ENCODE measurements at regions of chr2 and their contacts with region 1.

Region 1: DNA sequence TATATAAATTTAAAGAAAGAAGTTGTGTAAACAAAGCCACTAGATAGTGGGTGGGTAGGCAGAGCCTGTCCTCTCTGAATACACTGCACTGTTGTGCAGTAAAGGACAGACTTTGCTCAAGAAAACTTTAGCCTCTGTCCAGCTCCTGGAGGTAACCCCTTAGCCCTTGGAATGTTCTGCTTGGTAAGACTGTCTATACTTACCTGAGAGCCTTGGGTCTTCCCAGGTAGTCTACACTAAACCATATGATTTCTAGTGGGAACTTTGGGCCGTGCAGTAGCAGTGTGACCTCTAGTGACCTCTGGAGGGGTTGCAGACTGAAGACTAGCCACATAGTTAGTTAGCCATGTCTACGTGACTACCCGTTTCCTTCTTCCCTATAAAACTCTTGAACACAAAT is 678.3 kb upstream of the NRXN1 start:
- DNase-seq: peak; percentile 3
- H3K4me3 ChIP-seq: no peak overlapping the region
- H3K27ac ChIP-seq: no peak overlapping the region
- H3K4me1 ChIP-seq: no peaks in the 10 kb centered on the region
- H3K27me3 ChIP-seq: no peaks in the 10 kb centered on the region
- CTCF ChIP-seq: 0 out of 2 replicates have a peak, but pooled peaks have one; percentile 18

Region 2: DNA sequence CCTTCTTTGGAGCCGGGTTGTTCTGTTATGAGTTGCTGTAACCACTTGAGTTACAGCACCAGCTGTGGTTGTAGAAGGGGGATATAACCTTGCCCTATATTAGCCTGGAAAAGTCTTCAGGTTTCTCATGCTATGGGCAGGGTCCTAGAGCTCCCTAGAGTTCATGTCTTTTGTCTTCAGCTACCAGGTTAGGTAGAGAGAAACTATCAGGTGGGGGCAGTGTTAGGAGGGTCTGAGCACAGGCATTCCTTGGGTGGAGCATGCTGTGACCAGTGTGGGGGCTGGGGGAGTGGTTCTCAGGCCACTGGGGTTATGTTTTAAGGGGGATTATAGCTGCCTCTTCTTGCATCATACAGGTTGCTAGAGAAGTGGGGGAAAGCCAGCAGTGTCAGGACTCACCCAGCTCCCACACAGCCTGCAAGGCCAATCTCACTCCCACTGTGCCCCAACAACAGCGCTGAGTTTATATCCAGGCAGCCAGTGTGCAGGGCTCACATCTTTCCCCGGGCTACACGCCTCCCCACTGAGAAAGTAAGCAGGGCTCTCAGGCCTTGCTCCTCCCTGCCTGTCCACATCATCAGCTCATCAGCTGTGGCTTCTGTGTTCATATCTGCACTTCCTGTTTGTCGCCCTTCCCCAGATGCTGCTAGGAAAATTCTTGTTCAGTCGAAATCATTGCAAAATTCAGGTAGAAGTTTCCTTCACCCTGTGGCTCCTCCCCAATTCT is 544.5 kb before region 1 on chr2:
- CTCF ChIA-PET with region 1: no interaction called
- POLR2A ChIA-PET with region 1: interaction called, 20 read pairs
- intact Hi-C with region 1: no loop called
- DNase-seq: no peak
- H3K4me3 ChIP-seq: no peak overlapping the region
- H3K27ac ChIP-seq: no peak overlapping the region
- H3K4me1 ChIP-seq: no peaks in the 10 kb centered on the region
- H3K27me3 ChIP-seq: peaks cover 9% of the 10 kb centered on the region
- CTCF ChIP-seq: no peak

Region 3: GRCh38 chr2:51534166-51534565 is 176.1 kb before region 1 on chr2:
- CTCF ChIA-PET with region 1: no interaction called
- POLR2A ChIA-PET with region 1: no interaction called
- intact Hi-C with region 1: no loop called
- DNase-seq: no peak
- H3K4me3 ChIP-seq: no peak overlapping the region
- H3K27ac ChIP-seq: no peak overlapping the region
- H3K4me1 ChIP-seq: no peaks in the 10 kb centered on the region
- H3K27me3 ChIP-seq: no peaks in the 10 kb centered on the region
- CTCF ChIP-seq: no peak

Measured in A673 (cell line).